Heart left ventricle (tissue), 16 donors: ENCODE measurements at regions of chr22 and their contacts with region 1.

Region 1: GRCh38 chr22:28009272-28009827 is 90.3 kb upstream of the PITPNB start:
- DNase-seq: peak; percentile 69 to 81 (median 75)
- ATAC-seq: peak; percentile 58 to 81 (median 73)
- H3K4me3 ChIP-seq: no peak overlapping the region
- H3K27ac ChIP-seq: no peak overlapping the region
- H3K4me1 ChIP-seq: peaks cover 0 to 23% (median 7%) of the 10 kb centered on the region in 12 donors
- H3K27me3 ChIP-seq: no peaks in the 10 kb centered on the region
- CTCF ChIP-seq: peak; percentile 91 to 100 (median 96)
- POLR2A ChIP-seq: no peak

Region 2: GRCh38 chr22:27195094-27195493 is 814.3 kb before region 1 on chr22:
- intact Hi-C with region 1: no loop called
- DNase-seq: peak in 4 of 5 donors; percentile 30 to 80 (median 64)
- ATAC-seq: peak in 3 of 4 donors; percentile 78 to 85 (median 79)
- H3K4me3 ChIP-seq: no peak overlapping the region
- H3K27ac ChIP-seq: peak overlapping the region in 7 of 12 donors; percentile 16 to 74 (median 59)
- H3K4me1 ChIP-seq: peaks cover 0 to 5% (median 0%) of the 10 kb centered on the region in 12 donors
- H3K27me3 ChIP-seq: peaks cover 0 to 25% (median 0%) of the 10 kb centered on the region in 9 donors
- CTCF ChIP-seq: no peak
- POLR2A ChIP-seq: no peak

Region 3: GRCh38 chr22:27405672-27406388 is 603.5 kb before region 1 on chr22:
- intact Hi-C with region 1: loop called in 1 of 10 experiments (anchors 10 kb)
- DNase-seq: peak; percentile 47 to 83 (median 62)
- ATAC-seq: peak; percentile 74 to 89 (median 82)
- H3K4me3 ChIP-seq: no peak overlapping the region
- H3K27ac ChIP-seq: no peak overlapping the region
- H3K4me1 ChIP-seq: peaks cover 0 to 9% (median 0%) of the 10 kb centered on the region in 12 donors
- H3K27me3 ChIP-seq: peaks cover 0 to 24% (median 0%) of the 10 kb centered on the region in 9 donors
- CTCF ChIP-seq: peak; percentile 64 to 81 (median 74)
- POLR2A ChIP-seq: no peak

Region 4: DNA sequence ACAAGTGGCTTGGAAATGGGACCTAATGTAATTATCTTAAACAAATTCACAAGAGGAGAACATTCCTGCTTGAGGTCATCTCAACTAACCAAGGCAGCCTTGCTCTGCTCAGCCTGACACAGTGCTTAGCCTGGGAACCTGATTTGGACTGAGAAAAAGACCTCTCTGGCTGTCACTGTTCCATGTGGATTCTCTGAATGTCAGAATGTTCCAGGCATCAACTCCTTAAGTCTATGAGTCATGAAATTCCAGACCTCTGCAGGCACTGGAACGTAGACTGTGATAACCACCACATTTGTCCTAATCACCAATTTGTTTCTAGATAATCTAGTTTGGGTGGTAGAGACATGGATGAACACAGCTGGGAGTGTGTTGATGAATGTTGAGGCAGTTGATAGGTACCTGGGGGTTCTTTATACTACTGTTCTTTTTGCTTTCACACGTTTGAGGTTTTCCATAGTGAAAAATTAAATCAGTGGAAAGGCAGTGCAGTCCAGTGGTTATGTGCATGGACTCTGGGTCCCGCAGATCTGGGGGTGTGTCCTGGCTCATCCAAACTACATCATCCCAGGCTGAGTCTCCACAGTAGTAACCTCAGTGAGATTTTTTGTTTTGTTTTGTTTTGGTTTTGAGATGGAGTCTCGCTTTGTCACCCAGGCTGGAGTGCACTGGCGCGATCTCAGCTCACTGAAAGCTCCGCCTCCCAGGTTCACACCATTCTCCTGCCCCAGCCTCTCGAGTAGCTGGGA is 477.4 kb before region 1 on chr22:
- intact Hi-C with region 1: no loop called
- DNase-seq: no peak
- ATAC-seq: peak; percentile 54 to 90 (median 72)
- H3K4me3 ChIP-seq: no peak overlapping the region
- H3K27ac ChIP-seq: peak overlapping the region in 3 of 12 donors; percentile 3 to 52 (median 28)
- H3K4me1 ChIP-seq: peaks cover 0 to 7% (median 0%) of the 10 kb centered on the region in 12 donors
- H3K27me3 ChIP-seq: peaks cover 0 to 4% (median 0%) of the 10 kb centered on the region in 9 donors
- CTCF ChIP-seq: no peak
- POLR2A ChIP-seq: no peak

Region 5: DNA sequence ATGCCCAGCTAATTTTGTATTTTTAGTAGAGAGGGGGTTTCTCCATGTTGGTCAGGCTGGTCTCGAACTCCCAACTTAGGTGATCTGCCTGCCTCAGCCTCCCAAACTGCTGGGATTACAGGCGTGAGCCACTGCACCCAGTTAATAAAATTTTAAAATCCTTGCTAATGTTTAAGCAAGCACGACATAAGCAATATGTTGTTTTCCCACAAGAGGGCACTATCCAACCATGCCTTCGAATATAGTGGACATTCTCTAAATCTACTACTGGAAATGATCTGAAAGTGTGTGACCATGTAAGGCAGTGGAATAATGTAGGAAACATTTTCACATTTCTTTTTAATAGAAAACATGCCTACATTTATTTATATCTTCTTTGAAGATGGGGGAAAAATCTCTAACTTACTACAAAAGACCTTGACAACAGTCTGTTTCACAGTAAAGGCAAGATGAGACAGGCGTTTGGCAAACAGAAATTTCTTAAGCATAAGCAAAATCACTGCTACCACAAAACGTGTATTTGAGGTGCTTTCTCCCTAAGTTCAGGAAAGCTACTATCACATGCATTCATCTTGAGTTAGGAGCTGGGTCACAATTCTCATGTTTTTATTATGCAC is 128.5 kb before region 1 on chr22:
- intact Hi-C with region 1: loop called (anchors 1 to 2 kb)
- DNase-seq: peak in 1 of 5 donors; percentile 39
- ATAC-seq: peak; percentile 72 to 79 (median 76)
- H3K4me3 ChIP-seq: no peak overlapping the region
- H3K27ac ChIP-seq: peak overlapping the region in 6 of 12 donors; percentile 12 to 81 (median 36)
- H3K4me1 ChIP-seq: peaks cover 9 to 72% (median 50%) of the 10 kb centered on the region in 12 donors
- H3K27me3 ChIP-seq: no peaks in the 10 kb centered on the region
- CTCF ChIP-seq: peak; percentile 71 to 90 (median 84)
- POLR2A ChIP-seq: no peak

Region 6: GRCh38 chr22:27885977-27886842 is 123.1 kb before region 1 on chr22:
- intact Hi-C with region 1: loop called (anchors 1 to 2 kb)
- DNase-seq: peak in 1 of 5 donors; percentile 40
- ATAC-seq: peak in 3 of 4 donors; percentile 23 to 68 (median 41)
- H3K4me3 ChIP-seq: no peak overlapping the region
- H3K27ac ChIP-seq: peak overlapping the region in 11 of 12 donors; percentile 14 to 70 (median 41)
- H3K4me1 ChIP-seq: peaks cover 7 to 57% (median 28%) of the 10 kb centered on the region in 12 donors
- H3K27me3 ChIP-seq: no peaks in the 10 kb centered on the region
- CTCF ChIP-seq: peak; percentile 82 to 92 (median 88)
- POLR2A ChIP-seq: no peak

Region 7: GRCh38 chr22:27947448-27947847 is 61.9 kb before region 1 on chr22:
- intact Hi-C with region 1: no loop called
- DNase-seq: no peak
- ATAC-seq: no peak
- H3K4me3 ChIP-seq: no peak overlapping the region
- H3K27ac ChIP-seq: no peak overlapping the region
- H3K4me1 ChIP-seq: peaks cover 0 to 9% (median 0%) of the 10 kb centered on the region in 12 donors
- H3K27me3 ChIP-seq: no peaks in the 10 kb centered on the region
- CTCF ChIP-seq: no peak
- POLR2A ChIP-seq: no peak